PC-9 (cell line): ENCODE measurements at regions of chr3 and their contacts with region 1.

Region 1: DNA sequence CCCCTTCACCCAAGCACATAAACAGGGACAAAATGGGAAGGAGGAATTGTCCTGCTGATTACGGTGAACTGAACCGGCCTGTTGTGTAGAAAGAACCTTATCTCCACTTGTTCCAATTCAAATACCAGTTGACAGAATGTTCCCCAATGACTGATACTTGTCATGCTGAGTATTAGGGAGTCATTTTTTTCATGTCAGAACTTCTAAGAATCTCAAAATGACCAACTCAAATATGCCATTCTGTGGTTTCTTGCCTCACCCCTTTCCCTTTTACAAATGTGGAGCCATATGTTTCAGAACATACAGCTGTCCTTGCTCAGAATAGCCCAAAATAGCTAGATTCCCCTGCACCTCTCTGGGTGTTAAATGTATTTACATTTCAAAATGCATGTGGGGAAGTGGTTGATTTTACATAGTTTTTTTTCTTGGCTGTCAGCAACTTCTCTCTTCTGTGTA is 405.9 kb upstream of the TBL1XR1 start:
- DNase-seq: no peak
- H3K4me3 ChIP-seq: peak overlapping the region; percentile 9; the same call in 1 of the 2 replicates
- H3K27ac ChIP-seq: peak overlapping the region; percentile 89
- H3K4me1 ChIP-seq: peaks cover 61% of the 10 kb centered on the region
- H3K27me3 ChIP-seq: no peaks in the 10 kb centered on the region
- CTCF ChIP-seq: no peak

Region 2: GRCh38 chr3:177050501-177051237 is 552.5 kb before region 1 on chr3:
- CTCF ChIA-PET with region 1: no interaction called
- POLR2A ChIA-PET with region 1: no interaction called
- intact Hi-C with region 1: loop called (anchors 2 kb)
- DNase-seq: peak in 1 of 2 experiments; percentile 59
- H3K4me3 ChIP-seq: no peak overlapping the region
- H3K27ac ChIP-seq: peak overlapping the region; percentile 40
- H3K4me1 ChIP-seq: peaks cover 15% of the 10 kb centered on the region
- H3K27me3 ChIP-seq: no peaks in the 10 kb centered on the region
- CTCF ChIP-seq: peak; percentile 90

Region 3: DNA sequence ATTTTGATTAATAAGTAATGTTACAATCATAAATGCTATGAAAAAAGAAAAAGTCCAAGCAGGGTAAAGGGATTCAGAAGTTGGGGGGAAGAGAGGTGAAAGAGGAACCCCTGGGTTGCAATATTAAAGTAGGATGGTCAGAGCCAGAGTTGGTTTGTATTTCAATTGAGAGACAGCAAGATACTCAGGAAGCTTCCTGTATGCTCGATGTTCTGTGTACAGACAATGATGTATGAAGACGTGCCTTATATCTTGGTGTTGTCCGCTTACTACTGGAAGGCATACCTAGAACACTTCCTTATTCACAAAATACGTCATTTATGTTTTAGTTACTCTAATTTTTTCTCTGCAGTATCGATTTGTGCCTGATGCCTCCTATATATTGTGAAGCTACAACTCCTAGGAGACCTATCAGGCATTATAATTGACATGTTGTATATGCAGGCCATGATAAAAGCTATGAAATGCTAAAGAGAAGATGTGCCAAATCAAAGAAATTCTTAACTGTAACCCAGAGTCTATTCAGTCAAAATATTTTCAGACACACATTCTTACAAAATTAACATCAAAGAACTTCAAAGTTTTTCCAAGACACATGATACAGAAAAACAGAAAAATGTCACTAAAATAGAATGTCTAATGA is 493.4 kb before region 1 on chr3:
- CTCF ChIA-PET with region 1: no interaction called
- POLR2A ChIA-PET with region 1: no interaction called
- intact Hi-C with region 1: no loop called
- DNase-seq: no peak
- H3K4me3 ChIP-seq: no peak overlapping the region
- H3K27ac ChIP-seq: peak overlapping the region; percentile 3; the same call in 1 of the 2 replicates
- H3K4me1 ChIP-seq: no peaks in the 10 kb centered on the region
- H3K27me3 ChIP-seq: no peaks in the 10 kb centered on the region
- CTCF ChIP-seq: no peak

Region 4: DNA sequence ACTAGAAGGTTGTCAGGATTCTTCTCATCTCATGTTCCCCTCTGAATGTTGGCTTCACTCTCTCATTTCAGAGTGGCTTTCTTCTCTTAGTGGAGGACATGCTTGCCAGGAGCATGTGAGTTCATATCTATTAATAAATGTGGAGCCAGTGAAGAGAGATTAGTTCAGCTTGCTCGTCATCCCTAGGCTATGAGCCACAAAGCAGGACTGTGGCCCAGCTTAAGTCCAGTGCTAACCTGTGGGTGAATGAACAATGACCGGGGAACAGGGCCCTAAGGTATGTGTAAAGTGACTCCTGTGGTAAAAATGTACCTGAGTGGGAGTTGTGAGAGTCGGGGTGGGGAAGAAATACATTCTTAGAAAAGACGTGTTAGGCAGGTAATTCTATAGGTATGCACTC is 309.0 kb before region 1 on chr3:
- CTCF ChIA-PET with region 1: no interaction called
- POLR2A ChIA-PET with region 1: no interaction called
- intact Hi-C with region 1: loop called (anchors 2 kb)
- DNase-seq: peak; percentile 69 to 71
- H3K4me3 ChIP-seq: no peak overlapping the region
- H3K27ac ChIP-seq: peak overlapping the region; percentile 57; the same call in 1 of the 2 replicates
- H3K4me1 ChIP-seq: peaks cover 23% of the 10 kb centered on the region
- H3K27me3 ChIP-seq: no peaks in the 10 kb centered on the region
- CTCF ChIP-seq: no peak

Region 5: DNA sequence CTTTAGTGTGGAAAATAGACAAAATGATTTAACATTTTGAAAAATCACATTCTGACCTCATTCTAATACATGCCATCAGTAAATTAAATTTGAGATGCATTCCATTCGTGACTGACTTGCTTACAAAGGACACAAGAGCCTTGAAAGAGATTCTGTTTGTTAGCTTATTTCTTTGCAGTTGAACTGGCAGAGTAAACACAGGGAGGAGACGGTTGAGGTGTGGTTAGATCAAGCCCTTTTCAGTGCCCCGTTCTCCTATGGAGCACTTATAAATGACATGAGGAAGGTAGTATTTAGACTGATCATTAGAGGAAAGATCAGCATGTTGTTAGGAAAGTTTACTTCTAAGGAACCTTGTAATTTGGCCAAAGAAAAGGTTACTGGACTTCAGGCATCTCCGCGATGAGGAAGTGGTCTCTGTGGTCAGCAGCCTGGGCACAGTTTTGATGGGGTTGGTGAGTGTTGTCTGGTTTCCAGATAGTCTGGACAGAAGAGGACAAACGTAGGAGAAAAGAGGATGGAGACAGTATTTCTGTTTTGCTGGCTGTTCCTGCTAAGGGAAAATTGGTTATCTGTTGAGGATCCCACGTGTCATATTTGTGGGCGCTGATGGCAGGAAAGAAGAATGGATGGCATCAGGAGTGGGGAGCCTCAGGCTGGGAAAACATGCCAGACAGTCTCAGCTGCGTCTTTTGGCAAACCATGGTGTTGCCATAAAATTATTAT is 77.0 kb before region 1 on chr3:
- CTCF ChIA-PET with region 1: no interaction called
- POLR2A ChIA-PET with region 1: no interaction called
- intact Hi-C with region 1: loop called (anchors 2 kb)
- DNase-seq: peak; percentile 25 to 87
- H3K4me3 ChIP-seq: no peak overlapping the region
- H3K27ac ChIP-seq: no peak overlapping the region
- H3K4me1 ChIP-seq: peaks cover 79% of the 10 kb centered on the region
- H3K27me3 ChIP-seq: no peaks in the 10 kb centered on the region
- CTCF ChIP-seq: no peak

Region 6: DNA sequence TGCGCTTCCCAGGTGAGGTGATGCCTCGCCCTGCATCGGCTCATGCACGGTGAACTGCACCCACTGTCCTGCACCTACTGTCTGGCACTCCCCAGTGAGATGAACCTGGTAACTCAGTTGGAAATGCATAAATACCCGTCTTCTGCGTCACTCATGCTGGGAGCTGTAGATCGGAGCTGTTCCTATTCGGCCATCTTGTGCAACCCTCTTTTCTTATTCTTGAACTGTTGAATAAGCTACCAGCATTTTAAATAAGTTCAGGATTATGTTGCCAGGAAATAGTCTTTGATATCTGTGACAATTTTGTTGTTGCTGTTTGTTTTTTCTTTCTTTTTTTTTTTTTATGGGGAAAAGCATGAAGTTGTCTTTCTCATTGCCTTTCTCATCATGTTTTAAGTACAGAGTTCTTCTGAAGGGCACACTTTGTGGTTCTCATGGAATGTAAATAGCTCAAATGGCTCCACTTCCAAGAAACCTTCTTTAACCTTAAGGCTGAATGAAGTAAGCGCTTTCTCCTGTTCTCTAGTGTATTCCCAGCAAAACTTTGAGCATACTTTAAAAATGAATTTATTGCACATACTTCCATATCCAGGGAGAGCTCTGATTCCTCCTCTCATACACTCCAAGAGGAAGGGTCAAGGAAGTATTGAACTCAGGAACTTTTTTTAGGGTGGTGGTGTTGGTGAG is 62.1 kb after region 1 on chr3:
- CTCF ChIA-PET with region 1: no interaction called
- POLR2A ChIA-PET with region 1: no interaction called
- intact Hi-C with region 1: loop called (anchors 2 kb)
- DNase-seq: no peak
- H3K4me3 ChIP-seq: no peak overlapping the region
- H3K27ac ChIP-seq: no peak overlapping the region
- H3K4me1 ChIP-seq: no peaks in the 10 kb centered on the region
- H3K27me3 ChIP-seq: no peaks in the 10 kb centered on the region
- CTCF ChIP-seq: no peak

Region 7: DNA sequence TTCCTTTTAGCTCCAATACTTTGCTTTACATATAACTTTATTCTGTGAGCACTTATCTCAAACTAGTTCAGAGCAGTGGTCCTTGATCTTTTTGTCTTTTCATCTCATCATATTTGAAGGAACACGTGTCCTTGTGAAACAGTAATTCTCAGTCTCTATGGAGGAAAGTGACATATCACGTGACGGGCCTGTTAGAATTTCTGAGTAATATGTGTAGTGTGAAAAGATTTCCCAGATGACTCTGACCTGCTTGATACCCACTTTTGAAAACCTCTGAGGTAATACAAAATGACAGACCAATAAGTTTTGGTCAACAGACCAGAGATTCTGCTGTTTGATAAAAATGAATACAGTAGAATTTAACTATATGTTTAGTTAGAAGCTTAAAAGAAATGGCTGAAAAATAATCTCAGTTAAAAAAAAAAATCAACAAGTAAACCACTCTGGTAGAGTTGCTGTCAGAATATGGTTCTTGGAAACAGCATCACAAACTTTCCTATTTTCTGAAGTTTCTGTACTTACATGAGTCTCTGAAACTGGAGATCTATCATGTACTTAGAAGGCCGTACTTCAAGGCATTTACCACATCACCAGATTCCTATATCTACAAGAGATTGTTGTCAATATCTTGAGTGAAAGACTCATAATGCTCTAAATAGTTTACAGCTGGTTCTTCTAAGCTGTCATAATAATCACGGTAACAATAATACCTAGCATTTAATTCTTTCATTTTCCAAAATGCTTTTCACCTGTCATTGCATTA is 184.3 kb after region 1 on chr3:
- CTCF ChIA-PET with region 1: no interaction called
- POLR2A ChIA-PET with region 1: no interaction called
- intact Hi-C with region 1: no loop called
- DNase-seq: no peak
- H3K4me3 ChIP-seq: no peak overlapping the region
- H3K27ac ChIP-seq: no peak overlapping the region
- H3K4me1 ChIP-seq: no peaks in the 10 kb centered on the region
- H3K27me3 ChIP-seq: no peaks in the 10 kb centered on the region
- CTCF ChIP-seq: no peak

Region 8: DNA sequence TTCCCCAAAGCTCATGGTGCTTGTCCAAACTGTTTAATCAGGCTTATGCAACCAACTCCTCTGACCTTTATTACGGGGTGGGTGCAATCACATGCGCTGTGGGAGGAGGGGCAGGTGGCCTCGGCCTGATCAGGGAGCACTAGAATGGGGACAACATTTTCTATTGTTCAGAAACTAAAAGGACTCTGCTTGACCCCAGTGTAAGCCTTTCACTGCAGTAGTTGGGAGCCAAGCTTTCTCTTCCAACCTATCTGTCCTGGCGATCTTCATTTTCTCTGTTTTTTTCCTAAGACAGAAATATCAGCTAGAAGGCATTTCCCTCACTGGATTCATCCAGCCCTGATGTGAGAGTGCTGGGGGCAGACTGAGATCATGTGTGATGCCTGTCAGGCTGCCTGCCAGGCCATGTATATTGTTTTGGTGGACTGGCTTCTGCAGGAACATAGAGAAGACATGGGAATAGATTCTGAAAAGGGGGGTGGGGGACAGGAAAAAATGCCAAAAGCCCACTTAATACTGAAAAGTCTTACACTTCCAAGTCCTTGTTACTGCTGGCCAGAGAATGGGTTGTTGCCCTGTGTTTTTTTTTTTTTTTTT is 221.1 kb after region 1 on chr3:
- CTCF ChIA-PET with region 1: no interaction called
- POLR2A ChIA-PET with region 1: no interaction called
- intact Hi-C with region 1: loop called (anchors 2 kb)
- DNase-seq: peak; percentile 76 to 89
- H3K4me3 ChIP-seq: no peak overlapping the region
- H3K27ac ChIP-seq: peak overlapping the region; percentile 69
- H3K4me1 ChIP-seq: peaks cover 53% of the 10 kb centered on the region
- H3K27me3 ChIP-seq: no peaks in the 10 kb centered on the region
- CTCF ChIP-seq: no peak